Ascending aorta (tissue), 2 donors: ENCODE measurements at regions of chr1 and their contacts with region 1.

Region 1: GRCh38 chr1:232630047-232630893 is at the start of gene SIPA1L2:
- DNase-seq: peak; percentile 53 to 95
- H3K4me3 ChIP-seq: peak within 1 kb of the TSS; percentile 78 to 80
- H3K27ac ChIP-seq: peak within 1 kb of the TSS; percentile 88 to 92
- H3K4me1 ChIP-seq: no peaks in the 10 kb centered on the region
- H3K27me3 ChIP-seq: no peaks in the 10 kb centered on the region
- CTCF ChIP-seq: peak in 2 of 3 experiments; percentile 30 to 49
- total RNA-seq, gene SIPA1L2: 18.1 TPM

Region 2: GRCh38 chr1:231866392-231867331 is 763.6 kb before region 1 on chr1:
- intact Hi-C with region 1: loop called (anchors 2 kb)
- DNase-seq: no peak
- H3K4me3 ChIP-seq: no peak overlapping the region
- H3K27ac ChIP-seq: no peak overlapping the region
- H3K4me1 ChIP-seq: peaks cover 0 to 2% of the 10 kb centered on the region in 2 donors
- H3K27me3 ChIP-seq: no peaks in the 10 kb centered on the region
- CTCF ChIP-seq: peak; percentile 47 to 73 (median 67)

Region 3: DNA sequence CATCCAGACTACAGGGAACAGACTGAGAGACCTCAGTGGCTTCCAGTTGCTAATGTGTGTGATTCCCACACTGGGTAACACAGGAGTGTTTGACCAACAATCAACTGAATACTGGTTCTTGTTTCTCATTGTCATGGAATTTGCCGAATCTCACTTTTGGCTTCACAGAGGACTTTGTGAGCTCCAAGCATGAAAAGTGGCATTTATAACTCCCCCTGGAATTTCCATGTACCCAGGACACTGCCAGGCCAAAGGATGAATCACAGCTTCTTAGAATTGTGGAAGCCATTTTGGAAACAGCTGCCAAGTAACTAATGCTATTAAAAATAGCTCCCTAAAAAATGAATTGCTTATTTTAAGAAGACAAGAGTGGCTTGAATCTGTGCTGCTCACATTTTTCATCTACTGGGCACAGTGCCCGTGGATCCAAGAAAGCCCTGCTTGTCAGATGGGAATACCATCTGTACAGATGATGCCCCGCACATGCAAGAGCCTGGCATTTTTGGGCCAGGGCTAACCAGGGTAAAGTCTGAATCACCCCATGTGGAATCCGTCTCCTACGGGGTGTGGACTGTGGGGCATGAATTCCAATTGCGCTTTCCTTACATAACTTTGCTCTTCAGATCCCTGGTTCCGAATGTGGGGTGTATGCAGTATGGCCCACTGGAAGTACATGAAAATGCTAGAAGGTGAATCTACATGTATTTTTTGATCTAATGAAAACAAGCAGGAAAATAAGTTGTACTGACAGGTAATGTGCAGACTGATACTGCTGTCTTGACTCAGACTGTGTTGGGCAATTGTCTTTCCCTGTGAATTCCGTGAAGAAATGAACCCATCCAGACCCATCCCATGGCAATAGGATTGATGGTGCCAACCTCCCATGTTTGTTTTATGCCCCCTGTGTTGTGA is 487.6 kb before region 1 on chr1:
- intact Hi-C with region 1: loop called (anchors 5 kb)
- DNase-seq: peak; percentile 14 to 87
- H3K4me3 ChIP-seq: no peak overlapping the region
- H3K27ac ChIP-seq: peak overlapping the region; percentile 54 to 68
- H3K4me1 ChIP-seq: peaks cover 6 to 15% of the 10 kb centered on the region in 2 donors
- H3K27me3 ChIP-seq: no peaks in the 10 kb centered on the region
- CTCF ChIP-seq: no peak

Region 4: GRCh38 chr1:232416026-232416568 is 214.2 kb before region 1 on chr1:
- intact Hi-C with region 1: loop called (anchors 10 kb)
- DNase-seq: no peak
- H3K4me3 ChIP-seq: peak overlapping the region in 1 of 2 donors; percentile 60
- H3K27ac ChIP-seq: peak overlapping the region; percentile 28 to 48
- H3K4me1 ChIP-seq: peaks cover 0 to 2% of the 10 kb centered on the region in 2 donors
- H3K27me3 ChIP-seq: no peaks in the 10 kb centered on the region
- CTCF ChIP-seq: no peak

Region 5: GRCh38 chr1:232519186-232519585 is 111.1 kb before region 1 on chr1:
- intact Hi-C with region 1: no loop called
- DNase-seq: no peak
- H3K4me3 ChIP-seq: no peak overlapping the region
- H3K27ac ChIP-seq: no peak overlapping the region
- H3K4me1 ChIP-seq: no peaks in the 10 kb centered on the region
- H3K27me3 ChIP-seq: no peaks in the 10 kb centered on the region
- CTCF ChIP-seq: no peak

Region 6: GRCh38 chr1:232767305-232768074 is 137.2 kb after region 1 on chr1:
- intact Hi-C with region 1: loop called (anchors 5 kb)
- DNase-seq: peak in 1 of 2 donors; percentile 76
- H3K4me3 ChIP-seq: no peak overlapping the region
- H3K27ac ChIP-seq: peak overlapping the region; percentile 83 to 84
- H3K4me1 ChIP-seq: peaks cover 0 to 3% of the 10 kb centered on the region in 2 donors
- H3K27me3 ChIP-seq: no peaks in the 10 kb centered on the region
- CTCF ChIP-seq: no peak

Region 7: DNA sequence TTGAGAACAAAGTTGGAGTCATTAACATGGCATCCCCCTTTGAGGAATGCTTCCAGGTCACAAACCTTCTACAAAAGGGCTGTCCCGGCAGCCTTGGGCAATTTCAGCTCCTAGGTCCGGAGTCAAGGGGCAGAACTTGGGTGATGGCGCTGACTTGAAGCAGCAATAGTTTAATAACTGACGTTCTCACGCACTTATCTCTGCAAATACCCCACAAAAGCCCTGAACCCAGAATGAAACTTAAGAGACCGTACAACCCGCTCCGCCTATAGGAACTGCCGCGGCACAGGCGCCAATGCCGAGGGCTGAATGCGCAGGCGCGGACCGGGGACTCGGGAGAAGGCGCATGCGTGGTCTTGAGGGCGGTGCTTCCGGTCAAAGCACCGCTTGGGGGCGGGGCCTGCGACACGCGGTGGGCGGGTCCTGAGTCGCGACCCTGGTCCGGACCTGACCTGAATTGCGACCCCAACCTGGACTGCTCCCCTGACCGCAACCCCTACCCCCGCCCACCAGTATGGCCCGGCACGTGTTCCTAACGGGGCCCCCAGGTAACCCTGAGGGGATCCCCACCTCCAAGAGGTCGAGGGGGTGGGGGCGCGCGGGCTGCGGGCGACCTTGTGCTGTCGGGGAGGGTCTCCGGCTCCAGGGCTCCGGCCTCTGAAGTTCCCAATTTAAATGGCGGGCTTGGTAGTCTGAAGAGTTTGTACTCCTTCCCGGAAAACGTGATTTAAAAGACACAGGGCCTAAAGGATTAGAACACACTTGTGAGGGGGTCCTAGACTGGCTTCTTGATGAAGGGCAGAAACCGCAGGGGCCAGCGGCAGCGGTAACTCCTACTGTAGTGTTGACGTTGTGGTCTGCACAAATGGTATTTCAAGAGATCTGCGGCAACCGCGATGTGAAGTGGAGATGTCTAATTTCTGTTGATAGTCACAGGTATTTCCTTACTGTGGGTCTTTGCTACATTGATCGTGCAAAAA is 320.2 kb after region 1 on chr1 and contains the start of gene NTPCR:
- intact Hi-C with region 1: loop called (anchors 1 kb)
- DNase-seq: peak; percentile 49 to 95
- H3K4me3 ChIP-seq: peak within 1 kb of the TSS; percentile 84 to 93
- H3K27ac ChIP-seq: peak within 1 kb of the TSS; percentile 72 to 79
- H3K4me1 ChIP-seq: peaks cover 0 to 7% of the 10 kb centered on the region in 2 donors
- H3K27me3 ChIP-seq: no peaks in the 10 kb centered on the region
- CTCF ChIP-seq: peak in 2 of 3 experiments; percentile 8 to 12
- total RNA-seq, gene NTPCR: 41.6 TPM